ENCODE measurements at regions of chr7 and their contacts with region 1.

Region 1: DNA sequence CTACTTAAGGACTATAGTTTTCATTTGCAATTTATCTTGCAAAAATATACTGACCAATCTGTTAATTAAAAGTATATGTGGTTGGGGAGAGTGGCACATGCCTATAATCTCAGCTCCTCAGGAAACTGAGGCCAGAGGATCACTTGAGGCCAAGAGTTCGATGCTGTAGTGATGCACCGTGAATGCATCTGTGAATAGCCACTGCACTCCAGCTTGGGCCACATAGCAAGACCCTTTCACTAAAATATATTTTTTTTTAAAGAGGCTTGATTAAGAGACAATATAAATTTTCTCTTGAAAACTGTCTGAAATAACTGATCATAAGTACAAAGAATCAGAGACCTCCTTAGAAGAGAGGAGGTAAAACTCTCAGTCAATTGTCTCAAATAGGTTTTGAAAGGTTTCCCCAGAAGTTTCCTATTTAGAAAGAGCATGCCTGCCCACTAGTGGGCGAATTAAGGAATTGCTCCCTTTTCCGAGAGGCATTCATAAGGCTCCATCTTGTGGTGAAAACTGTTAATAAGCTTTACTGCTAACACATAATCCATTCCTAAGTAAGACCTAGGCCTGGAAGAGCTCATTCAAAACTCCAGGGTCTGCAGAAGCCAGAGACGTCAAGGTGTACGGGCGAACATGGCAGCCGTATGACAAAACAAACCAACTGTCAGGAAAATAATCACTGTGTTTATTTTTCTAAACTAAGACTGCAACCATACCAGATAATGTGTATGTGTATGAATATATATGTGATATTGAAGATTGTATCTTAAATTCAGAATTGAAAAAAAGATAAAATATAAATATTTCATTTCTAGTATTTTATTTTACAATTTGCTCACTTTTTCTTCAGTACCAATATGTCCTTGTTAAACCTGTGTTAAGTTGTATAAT is 6.8 kb upstream of the TAS2R40 start:
- DNase-seq: peak; percentile 50
- ATAC-seq: peak; percentile 91
- H3K4me3 ChIP-seq: no peak overlapping the region
- H3K27ac ChIP-seq: no peak overlapping the region
- H3K4me1 ChIP-seq: no peaks in the 10 kb centered on the region
- H3K27me3 ChIP-seq: no peaks in the 10 kb centered on the region; a peak in 2 of 4 replicates
- CTCF ChIP-seq: peak; percentile 97 to 100 (median 100); a peak in 5 of 6 replicates
- EP300 ChIP-seq: no peak
- POLR2A ChIP-seq: no peak
- RAD21 ChIP-seq: peak; percentile 100

Region 2: DNA sequence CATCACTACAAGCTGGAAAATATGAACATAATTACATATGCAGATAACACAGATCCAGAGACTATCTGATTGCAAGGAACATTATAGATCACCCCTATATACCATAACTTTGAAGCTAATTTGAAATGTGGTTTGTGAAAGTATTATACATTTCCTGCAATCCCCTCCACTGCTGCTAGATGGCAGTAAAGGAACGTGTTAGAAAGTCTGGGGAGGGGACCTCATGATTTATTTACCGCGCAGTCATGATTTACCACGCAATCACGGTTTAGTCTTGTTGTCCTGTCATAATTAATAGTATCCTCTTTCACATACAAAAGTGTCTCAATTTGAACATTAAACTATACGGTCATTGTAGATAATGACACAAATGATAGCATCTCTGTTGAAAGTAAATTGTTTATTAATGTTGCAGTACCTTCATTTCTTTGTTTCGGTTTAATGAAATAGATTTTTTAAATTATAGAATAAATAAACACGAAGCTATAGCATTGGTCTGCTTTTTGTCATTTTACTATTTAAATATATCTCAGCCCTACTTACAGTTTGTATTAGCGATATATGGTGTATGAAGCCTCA is 611.1 kb before region 1 on chr7:
- CTCF ChIA-PET with region 1: interaction called, 7 read pairs
- POLR2A ChIA-PET with region 1: no interaction called
- RAD21 ChIA-PET with region 1: interaction called, 4 read pairs
- SMC1A ChIA-PET with region 1: interaction called, 3 read pairs
- in situ Hi-C with region 1: no loop called
- intact Hi-C with region 1: loop called (anchors 10 kb)
- DNase-seq: no peak
- ATAC-seq: peak; percentile 74
- H3K4me3 ChIP-seq: no peak overlapping the region
- H3K27ac ChIP-seq: no peak overlapping the region
- H3K4me1 ChIP-seq: no peaks in the 10 kb centered on the region
- H3K27me3 ChIP-seq: no peaks in the 10 kb centered on the region
- CTCF ChIP-seq: peak; percentile 74 to 81 (median 81)
- EP300 ChIP-seq: no peak
- POLR2A ChIP-seq: no peak
- RAD21 ChIP-seq: peak; percentile 82

Region 3: DNA sequence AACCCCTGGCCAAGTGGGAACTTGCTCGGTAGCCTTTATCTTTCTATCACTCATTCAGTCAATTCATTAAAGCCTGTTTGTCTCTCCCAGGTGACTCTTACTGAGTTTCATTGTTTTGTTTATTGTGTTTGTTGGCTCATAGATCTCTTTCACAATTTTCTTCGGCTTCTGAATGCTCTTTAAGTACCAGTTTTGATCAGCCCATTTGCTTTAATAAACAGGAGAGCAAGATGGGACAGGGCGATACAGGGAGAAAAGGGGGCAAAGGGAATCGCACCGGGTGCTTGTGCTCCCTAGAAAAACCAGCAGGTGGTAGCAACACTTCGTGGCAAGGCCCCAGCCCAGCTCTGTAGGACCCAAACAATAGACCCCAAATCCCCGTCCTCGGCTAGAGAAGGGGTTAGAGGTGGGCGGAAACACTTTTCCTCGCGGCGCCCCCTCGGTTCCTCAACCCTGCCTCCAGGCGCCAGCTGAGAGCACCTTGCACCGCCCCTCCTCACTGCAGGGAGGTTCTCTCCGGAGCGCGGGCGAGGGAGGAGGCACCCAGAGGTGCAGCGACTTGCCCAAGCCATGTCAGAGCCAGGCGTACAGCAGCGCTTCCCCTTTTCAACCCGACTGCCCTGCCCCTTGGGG is 361.2 kb before region 1 on chr7:
- CTCF ChIA-PET with region 1: interaction called, 14 read pairs
- POLR2A ChIA-PET with region 1: no interaction called
- RAD21 ChIA-PET with region 1: interaction called, 3 read pairs
- SMC1A ChIA-PET with region 1: interaction called, 3 read pairs
- in situ Hi-C with region 1: no loop called
- intact Hi-C with region 1: loop called (anchors 2 kb)
- DNase-seq: no peak
- ATAC-seq: peak; percentile 92
- H3K4me3 ChIP-seq: peak overlapping the region; percentile 96
- H3K27ac ChIP-seq: no peak overlapping the region
- H3K4me1 ChIP-seq: no peaks in the 10 kb centered on the region
- H3K27me3 ChIP-seq: peaks cover 0 to 8% of the 10 kb centered on the region in 2 experiments
- CTCF ChIP-seq: peak; percentile 75 to 83 (median 81)
- EP300 ChIP-seq: no peak
- POLR2A ChIP-seq: no peak
- RAD21 ChIP-seq: peak; percentile 71

Region 4: DNA sequence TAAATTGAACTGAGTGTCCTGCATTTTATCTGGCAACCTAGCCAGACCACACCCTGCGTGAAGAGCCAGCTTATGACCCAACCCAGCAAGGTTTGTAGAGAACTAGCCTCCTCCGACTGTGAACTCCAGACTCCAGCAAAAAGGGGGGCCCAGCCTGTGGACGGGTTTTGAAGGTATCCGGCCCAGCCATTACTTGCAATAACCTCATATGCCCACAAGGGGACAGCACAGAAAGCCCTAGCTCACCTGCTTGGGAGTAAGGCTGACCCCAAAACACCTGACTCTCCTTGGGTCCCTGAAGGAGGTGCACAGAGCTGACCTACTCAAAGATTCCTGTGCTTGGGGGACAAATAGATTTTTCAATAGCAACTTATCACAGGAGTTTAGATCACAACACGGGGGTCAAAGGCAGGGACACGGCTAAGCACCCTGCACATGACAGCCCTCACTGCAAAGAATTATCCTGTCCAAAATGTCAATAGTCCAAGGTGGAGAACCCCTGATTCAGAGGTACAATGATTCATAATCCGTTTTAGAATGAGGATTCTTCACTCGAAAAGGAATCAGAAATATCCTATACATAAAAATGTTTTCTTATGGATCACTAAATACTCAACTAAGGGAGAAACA is 334.0 kb before region 1 on chr7:
- CTCF ChIA-PET with region 1: interaction called, 23 read pairs
- POLR2A ChIA-PET with region 1: no interaction called
- RAD21 ChIA-PET with region 1: interaction called, 5 read pairs
- SMC1A ChIA-PET with region 1: interaction called, 14 read pairs
- in situ Hi-C with region 1: loop called (anchors 10 kb)
- intact Hi-C with region 1: loop called (anchors 2 kb)
- DNase-seq: no peak
- ATAC-seq: peak; percentile 87
- H3K4me3 ChIP-seq: no peak overlapping the region
- H3K27ac ChIP-seq: no peak overlapping the region
- H3K4me1 ChIP-seq: no peaks in the 10 kb centered on the region
- H3K27me3 ChIP-seq: 0 out of 4 replicates have a peak, but pooled peaks cover 0 to 2% of the 10 kb centered on the region in 2 experiments
- CTCF ChIP-seq: peak; percentile 77 to 94 (median 89)
- EP300 ChIP-seq: no peak
- POLR2A ChIP-seq: no peak
- RAD21 ChIP-seq: peak; percentile 55

Region 5: GRCh38 chr7:143013893-143014292 is 201.1 kb before region 1 on chr7:
- CTCF ChIA-PET with region 1: interaction called, 434 read pairs
- POLR2A ChIA-PET with region 1: no interaction called
- RAD21 ChIA-PET with region 1: interaction called, 83 read pairs
- SMC1A ChIA-PET with region 1: interaction called, 191 read pairs
- in situ Hi-C with region 1: loop called (anchors 5 kb)
- intact Hi-C with region 1: no loop called
- DNase-seq: no peak
- ATAC-seq: no peak
- H3K4me3 ChIP-seq: no peak overlapping the region
- H3K27ac ChIP-seq: no peak overlapping the region
- H3K4me1 ChIP-seq: peaks cover 10% of the 10 kb centered on the region
- H3K27me3 ChIP-seq: peaks cover 0 to 3% of the 10 kb centered on the region in 2 experiments; a peak in 1 of 4 replicates
- CTCF ChIP-seq: no peak
- EP300 ChIP-seq: no peak
- POLR2A ChIP-seq: no peak
- RAD21 ChIP-seq: no peak